ENCODE measurements at regions of chr4 and their contacts with region 1.

Region 1: DNA sequence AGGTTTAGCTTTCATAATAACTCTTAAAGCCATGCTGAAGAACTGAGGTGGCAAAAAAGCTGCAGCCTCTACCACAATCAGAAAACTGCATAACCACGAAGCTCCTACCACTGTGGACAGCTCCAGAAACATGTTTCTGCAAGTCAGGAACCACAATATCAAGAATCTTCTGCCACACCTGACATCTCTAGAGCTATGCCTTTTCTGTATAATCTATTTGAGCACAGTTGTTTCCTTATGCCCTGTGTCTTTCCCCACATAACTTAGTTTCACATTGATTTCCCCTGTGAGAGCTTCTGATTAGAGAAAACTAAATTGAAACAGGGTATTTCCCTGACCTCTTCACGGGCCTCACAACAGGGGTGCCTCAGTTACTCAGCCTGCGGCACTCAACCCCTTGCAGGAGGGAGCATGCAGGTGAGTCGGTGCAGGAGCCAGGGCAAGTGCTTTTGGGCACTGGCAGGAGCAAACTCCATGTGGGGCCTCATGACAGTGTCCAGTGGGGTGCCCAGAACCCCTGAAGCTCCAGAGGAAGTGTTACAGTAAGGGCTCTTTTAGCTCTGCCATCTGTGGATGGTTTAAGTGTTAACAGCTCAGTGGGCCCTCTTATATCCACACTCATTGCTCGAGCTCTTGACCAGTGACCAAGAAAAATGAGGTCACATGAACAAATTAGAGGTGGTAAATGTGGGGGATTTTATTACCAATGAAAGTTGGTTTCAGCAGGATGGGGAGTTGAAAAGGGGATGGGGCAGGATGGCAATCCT is 132.8 kb upstream of the BMP3 start:
- DNase-seq: no peak
- H3K4me3 ChIP-seq: no peak overlapping the region
- H3K27ac ChIP-seq: no peak overlapping the region
- H3K4me1 ChIP-seq: peaks cover 12% of the 10 kb centered on the region
- CTCF ChIP-seq: no peak

Region 2: GRCh38 chr4:80560337-80560736 is 337.4 kb before region 1 on chr4:
- CTCF ChIA-PET with region 1: no interaction called
- POLR2A ChIA-PET with region 1: no interaction called
- intact Hi-C with region 1: no loop called
- DNase-seq: no peak
- H3K4me3 ChIP-seq: no peak overlapping the region
- H3K27ac ChIP-seq: no peak overlapping the region
- H3K4me1 ChIP-seq: no peaks in the 10 kb centered on the region
- CTCF ChIP-seq: no peak

Region 3: GRCh38 chr4:80948141-80948540 is 50.4 kb after region 1 on chr4:
- CTCF ChIA-PET with region 1: no interaction called
- POLR2A ChIA-PET with region 1: interaction called, 13 read pairs
- intact Hi-C with region 1: no loop called
- DNase-seq: no peak
- H3K4me3 ChIP-seq: no peak overlapping the region
- H3K27ac ChIP-seq: no peak overlapping the region
- H3K4me1 ChIP-seq: peaks cover 18% of the 10 kb centered on the region
- CTCF ChIP-seq: no peak

Region 4: DNA sequence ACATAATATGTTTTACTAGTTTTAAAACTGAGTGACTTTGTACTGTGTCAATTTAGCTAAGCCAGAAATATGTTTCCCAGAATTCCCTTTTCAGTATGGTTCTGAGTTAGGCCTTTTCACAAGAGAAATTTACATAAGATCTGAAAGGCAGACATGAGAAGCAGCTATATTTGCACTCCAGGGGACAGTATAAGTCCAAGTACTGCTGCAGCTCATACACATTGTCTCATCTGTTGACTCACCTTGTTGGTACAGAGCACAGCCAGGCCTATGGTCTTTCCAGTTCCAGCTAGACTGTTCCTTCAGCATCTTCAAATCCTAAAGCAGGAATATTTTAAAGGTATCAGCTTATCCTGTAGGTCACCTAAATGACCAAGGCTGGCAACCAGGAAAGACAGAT is 186.3 kb after region 1 on chr4:
- CTCF ChIA-PET with region 1: no interaction called
- POLR2A ChIA-PET with region 1: no interaction called
- intact Hi-C with region 1: no loop called
- DNase-seq: no peak
- H3K4me3 ChIP-seq: no peak overlapping the region
- H3K27ac ChIP-seq: no peak overlapping the region
- H3K4me1 ChIP-seq: peaks cover 9% of the 10 kb centered on the region
- CTCF ChIP-seq: no peak

Measured in OCI-LY7 (cell line).